Ascending aorta (tissue), 2 donors: ENCODE measurements at regions of chr2 and their contacts with region 1.

Region 1: DNA sequence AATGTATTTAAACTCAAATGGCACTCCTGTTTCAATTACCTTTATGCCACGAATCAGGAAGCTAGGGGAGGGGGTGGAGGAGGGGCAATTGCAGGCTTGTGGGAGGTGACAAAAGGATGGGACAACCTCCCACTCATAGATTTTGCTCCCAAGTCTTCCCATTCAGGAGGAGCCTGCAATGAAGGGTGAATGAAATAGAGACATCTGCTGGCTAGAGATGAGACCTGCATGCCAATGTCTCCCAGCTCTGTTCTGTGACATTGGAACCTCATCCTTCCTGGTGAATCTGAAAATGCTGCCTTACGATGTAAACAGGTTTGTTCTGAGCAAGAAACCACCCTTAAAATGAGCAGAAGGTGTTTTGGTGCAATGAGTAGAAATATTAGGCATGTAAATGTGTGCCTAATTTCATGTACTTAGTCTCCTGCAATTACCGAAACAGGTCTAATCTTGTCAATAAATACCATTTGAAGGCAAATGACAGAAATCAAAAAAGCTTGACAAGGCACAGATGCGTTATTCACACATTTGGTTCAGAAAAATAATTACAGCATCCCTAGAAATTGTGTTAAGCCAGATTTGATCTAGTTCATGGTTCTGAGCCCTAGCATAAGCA is 2.7 kb upstream of the PID1 start:
- DNase-seq: peak in 1 of 2 donors; percentile 77
- H3K4me3 ChIP-seq: peak overlapping the region; percentile 44 to 51
- H3K27ac ChIP-seq: peak overlapping the region; percentile 7 to 20
- H3K4me1 ChIP-seq: peaks cover 6 to 8% of the 10 kb centered on the region in 2 donors
- H3K27me3 ChIP-seq: no peaks in the 10 kb centered on the region
- CTCF ChIP-seq: peak; percentile 71 to 88 (median 84)

Region 2: DNA sequence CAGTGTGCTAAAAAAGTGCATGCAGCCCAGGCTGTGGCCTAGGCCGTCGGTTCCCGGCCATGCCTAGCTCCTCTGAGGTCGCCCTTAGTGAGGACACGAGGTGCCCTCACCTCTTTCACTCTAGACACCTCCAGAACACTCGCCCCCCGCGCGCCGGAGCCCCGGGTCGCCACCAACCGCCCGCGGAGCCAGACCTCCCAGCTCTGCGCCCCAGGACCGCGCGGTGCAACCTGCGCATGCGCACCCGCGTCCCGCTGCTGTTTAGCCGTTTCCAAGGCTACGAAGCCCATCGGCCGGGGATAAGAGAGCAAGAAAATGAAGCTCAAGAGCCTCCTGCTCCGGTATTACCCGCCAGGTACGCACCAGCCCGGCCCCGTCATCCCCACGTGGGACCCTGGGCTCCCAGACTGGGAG is 1402.4 kb before region 1 on chr2 and contains the start of gene DAW1:
- intact Hi-C with region 1: loop called (anchors 10 kb)
- DNase-seq: peak in 1 of 2 donors; percentile 81
- H3K4me3 ChIP-seq: peak within 1 kb of the TSS; percentile 40 to 65
- H3K27ac ChIP-seq: peak within 1 kb of the TSS; percentile 65 to 66
- H3K4me1 ChIP-seq: peaks cover 7 to 17% of the 10 kb centered on the region in 2 donors
- H3K27me3 ChIP-seq: no peaks in the 10 kb centered on the region
- CTCF ChIP-seq: no peak
- total RNA-seq, gene DAW1: not detected

Region 3: GRCh38 chr2:228699400-228699799 is 574.4 kb before region 1 on chr2:
- intact Hi-C with region 1: loop called (anchors 1 kb)
- DNase-seq: no peak
- H3K4me3 ChIP-seq: no peak overlapping the region
- H3K27ac ChIP-seq: no peak overlapping the region
- H3K4me1 ChIP-seq: no peaks in the 10 kb centered on the region
- H3K27me3 ChIP-seq: no peaks in the 10 kb centered on the region
- CTCF ChIP-seq: peak in 2 of 3 experiments; percentile 30 to 50

Region 4: DNA sequence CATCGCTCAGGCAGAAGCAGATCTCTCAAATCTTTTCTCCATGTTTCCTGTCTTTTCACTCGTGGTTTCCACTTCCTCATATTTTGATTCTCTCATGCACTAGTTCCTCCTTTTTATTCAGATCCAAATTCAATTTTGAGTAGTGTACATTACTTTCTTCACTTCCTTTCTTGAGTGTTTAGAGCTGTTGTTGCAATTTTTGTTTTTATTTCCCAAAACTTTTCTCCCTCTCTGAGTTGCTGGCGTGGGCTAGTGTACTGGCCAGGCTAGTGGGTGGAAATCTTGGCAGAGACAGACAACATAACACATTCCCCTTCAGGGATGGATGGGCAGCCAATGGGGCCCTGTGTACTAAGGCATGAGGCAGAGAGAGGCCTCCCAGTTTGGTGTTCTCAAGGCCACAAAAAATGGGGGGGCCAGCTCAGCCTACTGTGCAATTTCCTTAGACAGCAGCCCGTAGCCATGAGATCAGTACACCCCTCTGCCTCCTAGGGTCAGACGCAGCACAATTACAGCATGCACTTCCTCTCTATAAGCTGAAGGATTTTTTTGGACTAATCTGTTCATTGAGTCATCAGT is 142.4 kb after region 1 on chr2:
- intact Hi-C with region 1: loop called (anchors 5 kb)
- DNase-seq: peak; percentile 39 to 92
- H3K4me3 ChIP-seq: no peak overlapping the region
- H3K27ac ChIP-seq: peak overlapping the region; percentile 90
- H3K4me1 ChIP-seq: peaks cover 17 to 60% of the 10 kb centered on the region in 2 donors
- H3K27me3 ChIP-seq: no peaks in the 10 kb centered on the region
- CTCF ChIP-seq: no peak

Region 5: DNA sequence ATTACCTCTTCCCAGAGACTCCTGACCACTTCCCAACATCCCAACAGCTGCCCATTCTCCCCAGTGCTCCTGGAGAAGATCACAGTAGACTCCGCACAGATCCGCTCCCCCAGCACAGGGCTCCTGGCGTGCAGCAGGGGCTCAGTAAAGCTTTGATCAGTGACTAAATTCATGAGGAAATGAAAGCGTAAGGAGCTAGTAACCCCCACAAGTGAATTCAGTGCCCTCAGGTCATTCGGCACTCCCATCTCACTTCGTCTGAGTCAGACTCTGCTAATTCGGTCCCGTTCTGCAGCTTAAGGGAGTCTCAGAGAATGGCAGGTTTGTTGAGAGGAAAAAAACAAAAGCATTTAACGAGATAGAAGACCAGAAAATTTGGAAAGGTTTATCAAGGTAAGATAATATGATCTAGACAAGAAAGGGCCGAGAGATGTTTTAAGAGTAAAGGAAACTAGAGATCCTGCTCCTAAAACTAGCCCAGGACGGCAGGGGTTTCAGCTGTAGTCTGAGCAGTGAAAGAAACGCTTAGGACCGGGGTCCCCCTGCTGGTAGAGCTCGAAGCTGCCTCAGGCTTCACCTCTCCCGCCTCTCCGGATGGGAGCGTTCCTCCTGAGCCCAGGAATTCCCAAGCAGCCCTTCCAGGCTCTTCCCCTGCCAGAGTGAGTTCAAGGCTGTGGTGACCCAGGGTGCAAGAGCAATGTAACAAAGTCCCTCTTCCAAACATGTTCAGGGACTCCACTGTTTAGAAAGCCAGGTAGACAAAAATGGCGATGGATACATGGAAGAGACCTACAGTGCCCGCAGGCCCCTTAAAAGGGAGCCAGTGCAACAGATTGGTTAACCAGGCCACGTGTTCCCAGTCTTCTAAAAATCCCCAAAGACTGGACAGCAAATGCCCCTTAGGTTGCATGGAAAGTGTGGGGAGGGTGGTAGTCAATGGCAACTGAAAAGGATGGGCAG is 313.2 kb after region 1 on chr2:
- intact Hi-C with region 1: loop called (anchors 2 kb)
- DNase-seq: peak; percentile 21 to 88
- H3K4me3 ChIP-seq: peak overlapping the region; percentile 32 to 45
- H3K27ac ChIP-seq: no peak overlapping the region
- H3K4me1 ChIP-seq: peaks cover 0 to 4% of the 10 kb centered on the region in 2 donors
- H3K27me3 ChIP-seq: no peaks in the 10 kb centered on the region
- CTCF ChIP-seq: peak; percentile 86 to 93 (median 89)